Activated B cell treated with CpG ODN at 0.5 μM for 24 hours (primary cell): ENCODE measurements at regions of chr4 and their contacts with region 1.

Region 1: GRCh38 chr4:141307241-141307689 is 86.6 kb downstream of the ZNF330 start:
- DNase-seq: peak; percentile 21
- ATAC-seq: peak; percentile 81
- H3K4me3 Mint-ChIP-seq: no peak overlapping the region
- H3K27ac Mint-ChIP-seq: no peak overlapping the region
- H3K4me1 Mint-ChIP-seq: peaks cover 10% of the 10 kb centered on the region
- H3K27me3 Mint-ChIP-seq: peaks cover 5% of the 10 kb centered on the region
- CTCF ChIP-seq: peak; percentile 30

Region 2: DNA sequence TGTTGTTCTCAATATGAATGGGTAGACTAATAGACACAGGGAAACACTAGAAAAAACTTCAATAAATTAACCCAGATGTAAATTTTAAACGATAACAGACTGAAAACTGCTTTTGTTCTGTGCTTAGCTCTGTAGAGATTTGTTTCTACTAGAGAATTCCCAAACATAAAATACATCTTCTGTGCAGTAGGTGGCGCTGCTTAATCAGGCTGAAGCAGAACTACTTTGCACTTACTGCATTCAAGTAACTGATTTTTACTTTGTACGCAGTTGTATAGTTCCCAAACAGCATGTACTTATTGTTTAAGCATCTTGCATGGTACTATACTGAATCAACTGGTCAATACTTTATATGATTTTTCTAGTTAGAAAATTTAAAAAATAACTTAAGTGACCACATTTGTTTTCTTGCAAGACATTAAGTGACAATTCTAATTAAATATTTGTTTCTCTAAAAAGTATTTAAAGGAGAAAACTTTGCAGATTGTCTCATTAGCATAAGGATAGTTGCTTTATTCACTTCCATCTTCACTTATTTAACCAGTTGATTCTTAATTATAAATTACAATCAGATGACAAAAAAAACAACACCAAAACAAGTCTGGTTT is 819.7 kb after region 1 on chr4:
- CTCF ChIA-PET with region 1: no interaction called
- POLR2A ChIA-PET with region 1: no interaction called
- intact Hi-C with region 1: loop called (anchors 2 kb)
- DNase-seq: no peak
- ATAC-seq: no peak
- H3K4me3 Mint-ChIP-seq: no peak overlapping the region
- H3K27ac Mint-ChIP-seq: no peak overlapping the region
- H3K4me1 Mint-ChIP-seq: no peaks in the 10 kb centered on the region
- H3K27me3 Mint-ChIP-seq: no peaks in the 10 kb centered on the region
- CTCF ChIP-seq: no peak